ENCODE measurements at regions of chr20 and their contacts with region 1.

Region 1: GRCh38 chr20:57089691-57090150 is 176.7 kb downstream of the BMP7 start:
- DNase-seq: peak; percentile 81 to 89 (median 86)
- H3K4me3 ChIP-seq: no peak overlapping the region
- H3K27ac ChIP-seq: no peak overlapping the region
- H3K4me1 ChIP-seq: peaks cover 0 to 2% (median 0%) of the 10 kb centered on the region in 3 donors
- H3K27me3 ChIP-seq: no peaks in the 10 kb centered on the region
- CTCF ChIP-seq: peak; percentile 71

Region 2: GRCh38 chr20:56957737-56958553 is 131.8 kb before region 1 on chr20:
- intact Hi-C with region 1: no loop called
- DNase-seq: peak in 4 of 5 donors; percentile 93 to 95 (median 94)
- H3K4me3 ChIP-seq: no peak overlapping the region
- H3K27ac ChIP-seq: no peak overlapping the region
- H3K4me1 ChIP-seq: peaks cover 0 to 3% (median 0%) of the 10 kb centered on the region in 3 donors
- H3K27me3 ChIP-seq: no peaks in the 10 kb centered on the region
- CTCF ChIP-seq: no peak

Region 3: GRCh38 chr20:57346477-57346876 is 256.8 kb after region 1 on chr20:
- intact Hi-C with region 1: loop called (anchors 5 kb)
- DNase-seq: peak; percentile 70 to 88 (median 79)
- H3K4me3 ChIP-seq: no peak overlapping the region
- H3K27ac ChIP-seq: no peak overlapping the region
- H3K4me1 ChIP-seq: peaks cover 0 to under 1% (median 0%) of the 10 kb centered on the region in 3 donors
- H3K27me3 ChIP-seq: no peaks in the 10 kb centered on the region
- CTCF ChIP-seq: peak; percentile 78